ENCODE measurements at regions of chr3 and their contacts with region 1.

Region 1: DNA sequence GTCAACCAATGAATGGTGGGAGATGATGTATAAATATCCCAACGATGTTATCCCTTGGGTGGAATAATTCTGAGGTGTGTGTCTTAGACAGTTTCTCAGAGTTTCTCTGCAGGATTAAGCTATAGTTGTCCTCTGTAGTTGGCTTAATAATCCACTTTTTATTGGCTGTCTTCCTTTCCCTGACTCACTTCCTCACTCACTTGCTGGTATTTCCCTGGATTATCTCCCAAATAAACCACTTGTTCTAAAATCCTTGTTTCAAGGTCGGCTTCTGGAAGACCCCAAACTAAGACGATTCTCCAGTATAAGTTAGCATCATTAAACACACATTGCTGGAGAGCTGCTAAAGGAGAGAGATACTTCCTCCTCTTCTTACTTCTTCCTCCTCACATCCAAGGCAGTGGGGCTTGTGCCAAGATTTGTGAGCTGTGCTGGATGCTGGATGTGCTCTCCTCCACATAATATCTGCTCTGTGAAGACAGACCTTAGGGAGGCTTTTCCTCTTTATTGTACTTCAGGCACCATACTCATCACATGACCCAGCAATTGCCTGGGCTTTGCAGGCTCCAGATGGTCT is 22.5 kb upstream of the ROPN1 start:
- DNase-seq: no peak
- H3K4me3 Mint-ChIP-seq: no peak overlapping the region
- H3K27ac Mint-ChIP-seq: no peak overlapping the region
- H3K4me1 Mint-ChIP-seq: no peaks in the 10 kb centered on the region
- H3K27me3 Mint-ChIP-seq: peaks cover 40% of the 10 kb centered on the region

Region 2: DNA sequence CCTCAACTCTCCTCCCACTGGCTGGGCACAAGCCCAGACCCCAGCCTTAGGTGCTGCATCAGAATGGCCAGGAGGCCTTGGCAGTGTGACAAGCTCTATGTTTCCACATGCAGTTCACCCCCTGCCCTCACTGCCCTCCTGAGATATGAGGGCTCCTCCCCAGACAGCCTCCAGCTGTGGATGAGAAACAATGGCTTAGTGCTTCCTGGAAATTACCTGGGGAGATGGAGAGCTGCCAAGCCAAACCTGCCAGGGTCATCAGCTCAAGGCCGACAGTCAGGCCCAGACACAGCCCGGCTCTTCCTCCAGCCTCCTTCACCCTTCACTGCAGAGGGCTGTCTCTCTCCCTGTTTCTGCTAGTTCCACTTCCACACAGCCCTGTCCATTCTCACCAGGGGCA is 206.6 kb before region 1 on chr3:
- CTCF ChIA-PET with region 1: no interaction called
- DNase-seq: no peak
- H3K4me3 Mint-ChIP-seq: no peak overlapping the region
- H3K27ac Mint-ChIP-seq: no peak overlapping the region
- H3K4me1 Mint-ChIP-seq: no peaks in the 10 kb centered on the region
- H3K27me3 Mint-ChIP-seq: peaks cover 15% of the 10 kb centered on the region

Region 3: GRCh38 chr3:124078953-124079911 is 64.8 kb after region 1 on chr3:
- CTCF ChIA-PET with region 1: interaction called, 26 read pairs
- DNase-seq: peak; percentile 31
- H3K4me3 Mint-ChIP-seq: no peak overlapping the region
- H3K27ac Mint-ChIP-seq: no peak overlapping the region
- H3K4me1 Mint-ChIP-seq: no peaks in the 10 kb centered on the region
- H3K27me3 Mint-ChIP-seq: peaks cover 30% of the 10 kb centered on the region